Activated CD4-positive, alpha-beta T cell treated with anti-CD3 and anti-CD28 coated beads for 36 hours (primary cell): ENCODE measurements at regions of chr11 and their contacts with region 1.

Region 1: GRCh38 chr11:9460322-9461067 is at the start of gene ZNF143:
- DNase-seq: peak; percentile 100
- ATAC-seq: peak; percentile 93
- H3K4me3 Mint-ChIP-seq: peak within 1 kb of the TSS; percentile 93
- H3K27ac Mint-ChIP-seq: peak within 1 kb of the TSS; percentile 99
- H3K4me1 Mint-ChIP-seq: peaks cover 24% of the 10 kb centered on the region
- H3K27me3 Mint-ChIP-seq: no peaks in the 10 kb centered on the region
- total RNA-seq, gene ZNF143: 32.6 to 34.9 TPM

Region 2: GRCh38 chr11:8682303-8683114 is 778.0 kb before region 1 on chr11 and contains the starts of genes RPL27A and TRIM66:
- CTCF ChIA-PET with region 1: no interaction called
- POLR2A ChIA-PET with region 1: no interaction called
- intact Hi-C with region 1: loop called in 1 of 2 experiments (anchors 1 kb)
- DNase-seq: peak; percentile 99
- ATAC-seq: peak; percentile 96
- H3K4me3 Mint-ChIP-seq: peak within 1 kb of the TSS; percentile 97
- H3K27ac Mint-ChIP-seq: peak within 1 kb of the TSS; percentile 98
- H3K4me1 Mint-ChIP-seq: peaks cover 46% of the 10 kb centered on the region
- H3K27me3 Mint-ChIP-seq: no peaks in the 10 kb centered on the region
- total RNA-seq, gene RPL27A: 688 to 1,021 TPM
- total RNA-seq, gene TRIM66: 18.3 to 19.5 TPM

Region 3: DNA sequence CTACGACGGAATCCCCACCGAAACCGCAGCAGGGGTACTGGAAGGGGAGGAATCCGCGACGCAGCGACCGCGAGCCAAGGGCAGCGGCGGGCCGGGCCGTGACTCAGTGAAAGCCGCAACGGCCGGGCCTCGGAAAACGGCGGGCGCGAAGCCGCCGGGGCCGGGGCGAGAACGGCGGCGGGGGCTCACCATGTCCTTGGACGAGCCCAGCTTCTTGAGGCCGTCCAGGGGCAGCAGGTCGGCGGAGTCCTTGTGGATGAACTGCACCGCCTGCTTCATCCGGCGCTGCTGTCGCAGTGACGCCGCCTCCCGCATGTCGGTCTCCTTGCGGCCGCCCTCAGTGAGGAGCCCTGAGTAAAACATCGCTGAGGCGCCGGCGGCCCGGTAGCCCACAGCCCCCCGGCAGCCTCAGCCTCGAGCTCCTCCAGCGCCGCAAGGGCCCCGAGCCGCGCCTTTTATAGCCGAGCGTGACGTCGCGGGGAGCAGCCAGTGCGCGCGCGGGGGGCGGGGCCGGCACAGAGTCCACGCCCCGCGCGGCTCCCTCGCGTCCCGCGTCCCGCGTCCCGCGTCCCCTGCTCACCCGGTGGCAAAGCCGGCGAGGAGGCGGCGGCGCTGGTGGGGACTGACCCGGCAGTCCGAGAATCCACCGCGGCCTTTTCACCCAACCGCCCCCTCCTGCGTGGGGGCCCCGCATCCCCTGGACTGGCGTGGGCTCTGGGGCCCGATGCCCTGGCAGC is 456.8 kb before region 1 on chr11 and contains the start of gene NRIP3:
- CTCF ChIA-PET with region 1: no interaction called
- POLR2A ChIA-PET with region 1: no interaction called
- intact Hi-C with region 1: loop called in 1 of 2 experiments (anchors 2 kb)
- DNase-seq: peak; percentile 82
- ATAC-seq: peak; percentile 41
- H3K4me3 Mint-ChIP-seq: peak within 1 kb of the TSS; percentile 65
- H3K27ac Mint-ChIP-seq: peak within 1 kb of the TSS; percentile 38
- H3K4me1 Mint-ChIP-seq: peaks cover 27% of the 10 kb centered on the region
- H3K27me3 Mint-ChIP-seq: peaks cover 34% of the 10 kb centered on the region
- total RNA-seq, gene NRIP3: 2.1 to 2.2 TPM

Region 4: GRCh38 chr11:9314291-9315036 is 146.0 kb before region 1 on chr11 and contains the start of gene TMEM41B:
- CTCF ChIA-PET with region 1: interaction called, 3 read pairs
- POLR2A ChIA-PET with region 1: interaction called, 9 read pairs
- intact Hi-C with region 1: loop called (anchors 1 kb)
- DNase-seq: peak; percentile 100
- ATAC-seq: peak; percentile 95
- H3K4me3 Mint-ChIP-seq: peak within 1 kb of the TSS; percentile 99
- H3K27ac Mint-ChIP-seq: peak within 1 kb of the TSS; percentile 99
- H3K4me1 Mint-ChIP-seq: peaks cover 36% of the 10 kb centered on the region
- H3K27me3 Mint-ChIP-seq: peaks cover 11% of the 10 kb centered on the region
- total RNA-seq, gene TMEM41B: 20.2 to 29.3 TPM

Region 5: DNA sequence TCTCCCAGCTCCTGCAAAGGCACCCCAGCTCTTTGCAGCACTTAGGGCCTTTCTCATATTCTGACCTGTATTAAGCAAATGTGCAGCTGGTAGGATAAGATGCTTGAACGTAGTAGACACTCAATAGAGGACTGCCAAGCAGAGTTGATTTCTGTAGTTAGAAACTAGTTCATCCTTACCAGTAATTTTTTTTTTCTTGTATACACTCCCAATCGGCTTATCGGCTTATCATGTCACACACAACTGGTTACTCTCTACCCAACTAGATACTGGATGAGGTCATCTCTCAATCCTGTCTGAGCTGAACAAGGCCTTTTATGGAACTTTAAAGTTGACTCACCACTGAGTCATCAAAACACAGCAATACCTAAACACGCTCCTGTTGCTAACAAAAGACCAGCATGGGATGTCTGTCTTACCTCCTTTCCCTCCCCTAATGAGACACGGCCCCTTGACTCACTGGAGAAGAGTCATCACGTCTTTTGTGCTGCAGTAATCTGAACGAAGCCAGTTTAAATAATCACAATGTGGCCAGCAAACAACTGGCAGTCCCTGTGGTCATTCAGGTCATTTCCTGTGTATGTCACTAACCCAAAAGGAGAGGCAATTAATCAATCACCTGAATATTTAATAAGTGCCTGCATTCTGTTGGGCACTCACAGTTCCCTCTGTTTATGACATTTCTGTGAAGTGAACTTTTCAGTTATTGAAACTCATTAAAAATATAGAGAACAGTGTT is 105.5 kb after region 1 on chr11:
- CTCF ChIA-PET with region 1: interaction called, 3 read pairs
- POLR2A ChIA-PET with region 1: interaction called, 8 read pairs
- intact Hi-C with region 1: loop called in 1 of 2 experiments (anchors 1 kb)
- DNase-seq: peak; percentile 77
- ATAC-seq: peak; percentile 97
- H3K4me3 Mint-ChIP-seq: no peak overlapping the region
- H3K27ac Mint-ChIP-seq: peak overlapping the region; percentile 81
- H3K4me1 Mint-ChIP-seq: peaks cover 28% of the 10 kb centered on the region
- H3K27me3 Mint-ChIP-seq: peaks cover 3% of the 10 kb centered on the region

Region 6: GRCh38 chr11:9613118-9613829 is 152.8 kb after region 1 on chr11:
- CTCF ChIA-PET with region 1: no interaction called
- POLR2A ChIA-PET with region 1: interaction called, 6 read pairs
- intact Hi-C with region 1: loop called in 1 of 2 experiments (anchors 1 kb)
- DNase-seq: peak; percentile 94
- ATAC-seq: peak; percentile 64
- H3K4me3 Mint-ChIP-seq: peak overlapping the region; percentile 76
- H3K27ac Mint-ChIP-seq: peak overlapping the region; percentile 98
- H3K4me1 Mint-ChIP-seq: peaks cover 46% of the 10 kb centered on the region
- H3K27me3 Mint-ChIP-seq: no peaks in the 10 kb centered on the region

Region 7: GRCh38 chr11:10808553-10809372 is 1348.3 kb after region 1 on chr11 and contains the start of gene EIF4G2:
- CTCF ChIA-PET with region 1: no interaction called
- POLR2A ChIA-PET with region 1: interaction called, 3 read pairs
- intact Hi-C with region 1: loop called in 1 of 2 experiments (anchors 2 kb)
- DNase-seq: peak; percentile 98
- ATAC-seq: peak; percentile 96
- H3K4me3 Mint-ChIP-seq: peak within 1 kb of the TSS; percentile 93
- H3K27ac Mint-ChIP-seq: peak within 1 kb of the TSS; percentile 96
- H3K4me1 Mint-ChIP-seq: peaks cover 42% of the 10 kb centered on the region
- H3K27me3 Mint-ChIP-seq: peaks cover 2% of the 10 kb centered on the region
- total RNA-seq, gene EIF4G2: 953 to 1,693 TPM